Dendritic cell treated with granulocyte-macrophage colony-stimulating factor and Interleukin-4, amounts not matched to agents 40 ng/mL and 50 ng/mL, for 4 days (primary cell): ENCODE measurements at regions of chr7 and their contacts with region 1.

Region 1: DNA sequence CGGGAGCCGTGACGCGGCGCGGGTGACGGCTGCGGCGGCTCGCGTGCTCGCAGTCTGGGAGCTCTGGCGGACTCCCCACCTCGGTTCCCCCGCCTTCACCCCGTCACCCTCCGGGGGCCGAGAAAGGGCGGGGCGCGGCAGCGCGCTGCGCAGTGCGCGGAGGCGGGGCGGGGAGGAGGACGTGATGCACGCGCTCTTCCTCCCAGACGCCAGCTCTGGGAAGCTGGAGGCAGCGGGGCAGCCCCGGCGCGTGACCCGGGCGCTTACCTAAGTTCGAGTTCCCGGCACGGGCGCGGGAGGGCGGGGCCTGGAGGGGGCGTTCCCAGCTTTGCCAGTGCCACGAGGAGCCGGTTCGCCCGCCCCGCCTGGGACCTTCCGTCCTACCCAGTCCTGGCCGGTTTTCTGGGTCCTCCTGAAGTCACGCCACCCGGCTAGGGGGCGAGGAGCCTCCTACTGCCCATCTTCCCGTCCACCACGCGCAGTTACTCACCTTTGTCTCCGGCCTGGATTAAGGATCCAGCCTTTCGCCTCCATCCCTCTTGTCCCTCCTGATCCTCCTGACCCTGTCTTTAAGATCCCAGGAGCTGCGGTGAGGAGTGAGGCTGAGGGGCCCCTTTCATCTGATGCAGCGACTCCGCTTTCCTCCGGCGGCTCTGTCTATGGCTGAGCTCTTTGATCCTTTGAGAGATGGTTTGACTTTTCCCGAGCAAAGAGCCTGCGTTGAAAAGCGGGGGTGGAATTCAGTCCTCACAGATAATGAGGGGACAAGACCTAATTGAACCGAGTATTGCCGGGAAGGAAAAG is 470 bp upstream of the NAMPT start:
- H3K4me3 Mint-ChIP-seq: peak overlapping the region; percentile 97
- H3K27ac Mint-ChIP-seq: peak overlapping the region; percentile 99
- H3K4me1 Mint-ChIP-seq: peaks cover 38% of the 10 kb centered on the region
- H3K27me3 Mint-ChIP-seq: no peaks in the 10 kb centered on the region

Region 2: GRCh38 chr7:105885387-105886111 is 399.7 kb before region 1 on chr7:
- intact Hi-C with region 1: no loop called
- H3K4me3 Mint-ChIP-seq: no peak overlapping the region
- H3K27ac Mint-ChIP-seq: no peak overlapping the region
- H3K4me1 Mint-ChIP-seq: no peaks in the 10 kb centered on the region
- H3K27me3 Mint-ChIP-seq: peaks cover 8% of the 10 kb centered on the region

Region 3: GRCh38 chr7:106335814-106336213 is 50.6 kb after region 1 on chr7:
- intact Hi-C with region 1: no loop called
- H3K4me3 Mint-ChIP-seq: no peak overlapping the region
- H3K27ac Mint-ChIP-seq: no peak overlapping the region
- H3K4me1 Mint-ChIP-seq: no peaks in the 10 kb centered on the region
- H3K27me3 Mint-ChIP-seq: peaks cover 3% of the 10 kb centered on the region

Region 4: DNA sequence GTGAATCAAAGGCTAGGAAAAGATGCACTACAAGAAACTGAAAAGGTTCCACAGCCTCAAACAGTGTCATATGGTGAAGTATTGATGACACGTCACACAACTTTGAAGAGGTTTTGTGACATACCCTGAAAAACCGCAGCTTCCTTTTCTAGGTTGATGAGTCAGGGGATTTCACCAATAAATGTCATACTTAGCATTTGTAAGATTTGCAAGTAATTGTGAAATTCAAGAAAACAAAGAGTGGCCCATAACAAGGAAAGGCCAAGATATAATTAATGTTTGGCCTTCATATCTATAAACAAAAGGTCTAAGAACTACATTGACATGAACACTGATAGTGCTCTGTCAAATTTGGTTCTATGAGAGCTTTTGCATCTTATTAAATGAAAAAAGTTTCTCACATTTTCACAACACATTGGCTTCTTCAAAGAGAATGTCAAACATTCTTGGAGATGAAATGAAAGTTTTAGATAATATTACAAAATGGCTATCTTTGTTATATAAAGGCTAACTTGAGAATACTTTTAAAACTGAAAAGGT is 61.5 kb after region 1 on chr7:
- intact Hi-C with region 1: loop called (anchors 1 kb)
- H3K4me3 Mint-ChIP-seq: no peak overlapping the region
- H3K27ac Mint-ChIP-seq: peak overlapping the region; percentile 91
- H3K4me1 Mint-ChIP-seq: peaks cover 45% of the 10 kb centered on the region
- H3K27me3 Mint-ChIP-seq: no peaks in the 10 kb centered on the region

Region 5: DNA sequence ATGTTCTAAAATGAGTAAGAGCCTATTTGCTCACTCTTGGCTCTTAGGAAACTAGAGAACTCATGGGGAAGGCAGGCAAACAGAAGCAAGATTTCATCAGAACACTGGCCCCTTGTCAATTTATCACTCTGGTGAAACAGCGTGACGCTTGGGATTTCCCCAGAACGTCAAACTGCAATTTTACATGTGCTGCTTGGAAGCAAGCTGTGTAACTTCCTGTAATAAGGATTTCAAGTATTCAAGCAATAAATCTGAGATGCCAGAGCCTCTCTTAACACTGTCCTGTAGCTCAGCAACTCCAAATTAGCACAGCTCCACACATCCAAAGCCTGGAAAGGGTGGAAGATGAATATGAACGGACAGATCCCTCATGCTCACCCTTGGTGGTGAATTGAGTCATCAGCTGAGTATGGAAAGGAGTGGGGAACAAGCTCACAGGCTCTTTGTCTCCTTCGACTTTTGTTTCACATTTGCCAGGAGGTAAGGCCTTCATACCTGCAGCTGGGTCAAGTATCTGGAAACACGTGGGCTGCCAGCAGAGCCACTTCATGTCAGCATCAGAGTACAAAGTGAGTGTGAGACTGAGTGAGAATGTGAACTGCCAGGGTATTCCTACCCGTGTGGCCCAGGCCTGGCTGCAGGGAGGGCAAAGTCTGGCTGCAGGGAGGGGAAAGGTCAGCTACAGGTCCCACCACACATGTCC is 139.9 kb after region 1 on chr7:
- intact Hi-C with region 1: loop called (anchors 2 kb)
- H3K4me3 Mint-ChIP-seq: no peak overlapping the region
- H3K27ac Mint-ChIP-seq: peak overlapping the region; percentile 87
- H3K4me1 Mint-ChIP-seq: peaks cover 57% of the 10 kb centered on the region
- H3K27me3 Mint-ChIP-seq: peaks cover 2% of the 10 kb centered on the region

Region 6: GRCh38 chr7:106461993-106462859 is 177.0 kb after region 1 on chr7:
- intact Hi-C with region 1: loop called (anchors 1 kb)
- H3K4me3 Mint-ChIP-seq: no peak overlapping the region
- H3K27ac Mint-ChIP-seq: no peak overlapping the region
- H3K4me1 Mint-ChIP-seq: peaks cover 14% of the 10 kb centered on the region
- H3K27me3 Mint-ChIP-seq: no peaks in the 10 kb centered on the region